ENCODE measurements at regions of chr18 and their contacts with region 1.

Region 1: GRCh38 chr18:80157708-80158343 is 48.8 kb downstream of the ADNP2 start:
- DNase-seq: peak; percentile 88
- ATAC-seq: no peak
- H3K4me3 Mint-ChIP-seq: no peak overlapping the region
- H3K27ac Mint-ChIP-seq: no peak overlapping the region
- H3K4me1 Mint-ChIP-seq: peaks cover 3% of the 10 kb centered on the region
- H3K27me3 Mint-ChIP-seq: peaks cover 22% of the 10 kb centered on the region

Region 2: GRCh38 chr18:79790996-79791972 is 366.5 kb before region 1 on chr18:
- CTCF ChIA-PET with region 1: no interaction called
- POLR2A ChIA-PET with region 1: no interaction called
- intact Hi-C with region 1: loop called (anchors 5 to 10 kb)
- DNase-seq: no peak
- ATAC-seq: no peak
- H3K4me3 Mint-ChIP-seq: no peak overlapping the region
- H3K27ac Mint-ChIP-seq: no peak overlapping the region
- H3K4me1 Mint-ChIP-seq: peaks cover 4% of the 10 kb centered on the region
- H3K27me3 Mint-ChIP-seq: peaks cover 50% of the 10 kb centered on the region

Region 3: GRCh38 chr18:80075940-80076339 is 81.9 kb before region 1 on chr18:
- CTCF ChIA-PET with region 1: no interaction called
- POLR2A ChIA-PET with region 1: no interaction called
- intact Hi-C with region 1: no loop called
- DNase-seq: no peak
- ATAC-seq: no peak
- H3K4me3 Mint-ChIP-seq: no peak overlapping the region
- H3K27ac Mint-ChIP-seq: no peak overlapping the region
- H3K4me1 Mint-ChIP-seq: no peaks in the 10 kb centered on the region
- H3K27me3 Mint-ChIP-seq: no peaks in the 10 kb centered on the region

Region 4: GRCh38 chr18:80147418-80148325 is 10.2 kb before region 1 on chr18:
- CTCF ChIA-PET with region 1: interaction called, 41 read pairs
- POLR2A ChIA-PET with region 1: no interaction called
- intact Hi-C with region 1: no loop called
- DNase-seq: peak; percentile 86
- ATAC-seq: peak; percentile 87
- H3K4me3 Mint-ChIP-seq: peak overlapping the region; percentile 74
- H3K27ac Mint-ChIP-seq: no peak overlapping the region
- H3K4me1 Mint-ChIP-seq: peaks cover 15% of the 10 kb centered on the region
- H3K27me3 Mint-ChIP-seq: peaks cover 9% of the 10 kb centered on the region

Region 5: GRCh38 chr18:80200171-80200931 is 42.5 kb after region 1 on chr18:
- CTCF ChIA-PET with region 1: interaction called, 5 read pairs
- POLR2A ChIA-PET with region 1: no interaction called
- intact Hi-C with region 1: loop called (anchors 1 to 2 kb)
- DNase-seq: no peak
- ATAC-seq: no peak
- H3K4me3 Mint-ChIP-seq: no peak overlapping the region
- H3K27ac Mint-ChIP-seq: no peak overlapping the region
- H3K4me1 Mint-ChIP-seq: peaks cover 17% of the 10 kb centered on the region
- H3K27me3 Mint-ChIP-seq: peaks cover 51% of the 10 kb centered on the region

Region 6: DNA sequence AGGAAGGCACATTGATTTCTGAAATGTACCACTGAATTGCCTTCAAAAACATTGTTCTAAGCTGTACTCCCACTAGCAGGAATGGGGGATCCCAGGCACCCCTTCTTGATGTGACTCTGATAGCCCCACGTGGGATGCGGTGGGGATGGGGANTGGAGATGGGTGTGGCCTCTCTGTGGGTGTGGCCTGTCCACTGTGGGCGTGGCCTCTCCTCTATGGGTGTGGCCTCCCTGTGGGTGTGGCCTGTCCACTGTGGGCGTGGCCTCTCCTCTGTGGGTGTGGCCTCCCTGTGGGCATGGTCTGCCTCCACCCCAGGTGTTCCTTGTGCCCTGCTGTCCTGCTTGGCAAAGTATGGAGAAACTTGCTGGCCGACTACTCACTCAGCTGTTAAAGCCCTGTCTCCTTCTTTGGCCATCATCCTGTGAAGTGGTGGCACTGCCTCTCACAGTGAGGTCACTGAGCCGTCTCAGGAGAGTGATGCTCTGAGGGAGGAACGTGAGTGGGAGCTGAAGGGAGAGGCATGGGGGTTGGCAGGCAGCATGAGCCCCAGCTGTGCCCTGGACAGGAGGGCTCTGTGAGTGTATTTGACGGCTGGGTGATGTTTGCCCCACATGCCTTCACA is 96.2 kb after region 1 on chr18:
- CTCF ChIA-PET with region 1: interaction called, 57 read pairs
- POLR2A ChIA-PET with region 1: no interaction called
- intact Hi-C with region 1: loop called in 1 of 2 experiments (anchors 1 kb)
- DNase-seq: peak; percentile 57
- ATAC-seq: peak; percentile 89
- H3K4me3 Mint-ChIP-seq: no peak overlapping the region
- H3K27ac Mint-ChIP-seq: no peak overlapping the region
- H3K4me1 Mint-ChIP-seq: no peaks in the 10 kb centered on the region
- H3K27me3 Mint-ChIP-seq: peaks cover 13% of the 10 kb centered on the region